Prostate gland (tissue), 2 donors: ENCODE measurements at regions of chr1 and their contacts with region 1.

Region 1: GRCh38 chr1:37807555-37808368 is at the starts of genes C1orf122 and YRDC:
- DNase-seq: peak; percentile 91
- H3K4me3 ChIP-seq: peak within 1 kb of the TSS; percentile 79 to 90
- H3K27ac ChIP-seq: peak within 1 kb of the TSS; percentile 94 to 98
- H3K4me1 ChIP-seq: peaks cover 14% of the 10 kb centered on the region
- H3K27me3 ChIP-seq: no peaks in the 10 kb centered on the region
- CTCF ChIP-seq: no peak
- POLR2A ChIP-seq: peak; percentile 50
- total RNA-seq, gene C1orf122: 141 to 170 TPM
- total RNA-seq, gene YRDC: 23.7 to 33.5 TPM

Region 2: GRCh38 chr1:37553927-37554808 is 253.6 kb before region 1 on chr1 and contains the start of gene SNIP1:
- intact Hi-C with region 1: loop called (anchors 10 kb)
- DNase-seq: peak; percentile 93
- H3K4me3 ChIP-seq: peak within 1 kb of the TSS; percentile 89 to 93
- H3K27ac ChIP-seq: peak within 1 kb of the TSS; percentile 76 to 82
- H3K4me1 ChIP-seq: peaks cover 10% of the 10 kb centered on the region
- H3K27me3 ChIP-seq: no peaks in the 10 kb centered on the region
- CTCF ChIP-seq: peak in 2 of 4 experiments; percentile 23 to 25
- POLR2A ChIP-seq: no peak
- total RNA-seq, gene SNIP1: 27.6 to 45.7 TPM

Region 3: GRCh38 chr1:37595440-37596319 is 212.1 kb before region 1 on chr1 and contains the start of gene GNL2:
- intact Hi-C with region 1: loop called (anchors 10 kb)
- DNase-seq: peak; percentile 96
- H3K4me3 ChIP-seq: peak within 1 kb of the TSS; percentile 70 to 72
- H3K27ac ChIP-seq: peak within 1 kb of the TSS; percentile 56 to 64
- H3K4me1 ChIP-seq: peaks cover 10% of the 10 kb centered on the region
- H3K27me3 ChIP-seq: no peaks in the 10 kb centered on the region
- CTCF ChIP-seq: peak in 1 of 4 experiments; percentile 4
- POLR2A ChIP-seq: peak; percentile 51
- total RNA-seq, gene GNL2: 23.2 to 52.0 TPM

Region 4: GRCh38 chr1:37692078-37692833 is 115.5 kb before region 1 on chr1 and contains the start of gene CDCA8:
- intact Hi-C with region 1: loop called (anchors 5 kb)
- DNase-seq: peak; percentile 99
- H3K4me3 ChIP-seq: peak within 1 kb of the TSS; percentile 68 to 87
- H3K27ac ChIP-seq: peak within 1 kb of the TSS; percentile 80 to 83
- H3K4me1 ChIP-seq: peaks cover 17% of the 10 kb centered on the region
- H3K27me3 ChIP-seq: no peaks in the 10 kb centered on the region
- CTCF ChIP-seq: peak; percentile 57 to 86 (median 68)
- POLR2A ChIP-seq: no peak
- total RNA-seq, gene CDCA8: 2.1 to 8.6 TPM

Region 5: GRCh38 chr1:37859507-37860345 is 52.0 kb after region 1 on chr1 and contains the start of gene MTF1:
- intact Hi-C with region 1: loop called (anchors 2 kb)
- DNase-seq: peak; percentile 97
- H3K4me3 ChIP-seq: peak within 1 kb of the TSS; percentile 77 to 92
- H3K27ac ChIP-seq: peak within 1 kb of the TSS; percentile 86 to 89
- H3K4me1 ChIP-seq: peaks cover 10% of the 10 kb centered on the region
- H3K27me3 ChIP-seq: no peaks in the 10 kb centered on the region
- CTCF ChIP-seq: peak; percentile 85 to 89 (median 88)
- POLR2A ChIP-seq: peak; percentile 74
- total RNA-seq, gene MTF1: 4.5 to 8.8 TPM